CD8-positive, alpha-beta T cell (primary cell): ENCODE measurements at regions of chr7 and their contacts with region 1.

Region 1: GRCh38 chr7:584122-584465 is 64.4 kb upstream of the PDGFA start:
- DNase-seq: peak; percentile 79 to 97 (median 91)
- ATAC-seq: peak; percentile 97
- H3K4me3 ChIP-seq: peak overlapping the region; percentile 59 to 66
- H3K4me3 Mint-ChIP-seq: peak overlapping the region; percentile 90
- H3K27ac ChIP-seq: peak overlapping the region; percentile 74 to 75
- H3K27ac Mint-ChIP-seq: peak overlapping the region; percentile 99
- H3K4me1 ChIP-seq: peaks cover 21% of the 10 kb centered on the region
- H3K4me1 Mint-ChIP-seq: peaks cover 39% of the 10 kb centered on the region
- H3K27me3 ChIP-seq: no peaks in the 10 kb centered on the region
- H3K27me3 Mint-ChIP-seq: no peaks in the 10 kb centered on the region
- CTCF ChIP-seq: no peak

Region 2: GRCh38 chr7:604001-604883 is 20.1 kb after region 1 on chr7:
- CTCF ChIA-PET with region 1: no interaction called
- POLR2A ChIA-PET with region 1: interaction called, 6 read pairs
- intact Hi-C with region 1: loop called (anchors 1 kb)
- DNase-seq: peak; percentile 83 to 98 (median 95)
- ATAC-seq: peak; percentile 71
- H3K4me3 ChIP-seq: peak overlapping the region; percentile 56 to 81
- H3K4me3 Mint-ChIP-seq: peak overlapping the region; percentile 90
- H3K27ac ChIP-seq: peak overlapping the region; percentile 96 to 100
- H3K27ac Mint-ChIP-seq: peak overlapping the region; percentile 100
- H3K4me1 ChIP-seq: peaks cover 80% of the 10 kb centered on the region
- H3K4me1 Mint-ChIP-seq: peaks cover 63% of the 10 kb centered on the region
- H3K27me3 ChIP-seq: no peaks in the 10 kb centered on the region
- H3K27me3 Mint-ChIP-seq: no peaks in the 10 kb centered on the region
- CTCF ChIP-seq: no peak

Region 3: DNA sequence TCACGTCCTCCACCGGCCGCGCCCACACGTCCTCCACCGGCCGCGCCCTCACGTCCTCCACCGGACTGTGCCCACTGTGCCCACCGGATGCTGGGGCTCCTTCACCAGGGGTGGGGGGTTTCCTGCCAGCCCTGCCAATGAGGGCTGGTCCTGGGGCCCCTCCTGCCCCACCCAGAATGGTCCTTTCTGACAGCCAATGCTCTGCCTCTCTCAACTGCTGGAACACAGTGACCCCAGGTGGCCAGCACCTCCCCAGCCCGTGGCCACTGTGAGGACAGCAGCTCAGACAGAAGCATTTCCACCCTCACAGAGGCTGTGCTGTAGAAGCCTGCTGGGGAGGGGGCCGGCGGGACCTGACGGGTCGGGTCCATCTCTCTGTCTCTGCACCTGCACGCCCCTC is 52.3 kb after region 1 on chr7:
- CTCF ChIA-PET with region 1: no interaction called
- POLR2A ChIA-PET with region 1: no interaction called
- intact Hi-C with region 1: loop called in 1 of 2 experiments (anchors 5 kb)
- DNase-seq: peak in 8 of 9 experiments; percentile 33 to 74 (median 62)
- ATAC-seq: peak; percentile 79
- H3K4me3 ChIP-seq: no peak overlapping the region
- H3K4me3 Mint-ChIP-seq: no peak overlapping the region
- H3K27ac ChIP-seq: no peak overlapping the region
- H3K27ac Mint-ChIP-seq: no peak overlapping the region
- H3K4me1 ChIP-seq: peaks cover 8% of the 10 kb centered on the region
- H3K4me1 Mint-ChIP-seq: peaks cover 16% of the 10 kb centered on the region
- H3K27me3 ChIP-seq: no peaks in the 10 kb centered on the region
- H3K27me3 Mint-ChIP-seq: no peaks in the 10 kb centered on the region
- CTCF ChIP-seq: peak; percentile 35

Region 4: GRCh38 chr7:726084-726853 is 142.2 kb after region 1 on chr7 and contains the start of gene DNAAF5:
- CTCF ChIA-PET with region 1: no interaction called
- POLR2A ChIA-PET with region 1: no interaction called
- intact Hi-C with region 1: loop called (anchors 1 to 2 kb)
- DNase-seq: peak; percentile 69 to 91 (median 86)
- ATAC-seq: peak; percentile 87
- H3K4me3 ChIP-seq: peak within 1 kb of the TSS; percentile 65 to 77
- H3K4me3 Mint-ChIP-seq: peak within 1 kb of the TSS; percentile 79
- H3K27ac ChIP-seq: peak within 1 kb of the TSS; percentile 65 to 67
- H3K27ac Mint-ChIP-seq: peak within 1 kb of the TSS; percentile 75
- H3K4me1 ChIP-seq: peaks cover 14% of the 10 kb centered on the region
- H3K4me1 Mint-ChIP-seq: peaks cover 17% of the 10 kb centered on the region
- H3K27me3 ChIP-seq: no peaks in the 10 kb centered on the region
- H3K27me3 Mint-ChIP-seq: no peaks in the 10 kb centered on the region
- CTCF ChIP-seq: no peak
- total RNA-seq, gene DNAAF5: 4.3 to 4.9 TPM